Naive thymus-derived CD4-positive, alpha-beta T cell (primary cell): ENCODE measurements at regions of chr1 and their contacts with region 1.

Region 1: DNA sequence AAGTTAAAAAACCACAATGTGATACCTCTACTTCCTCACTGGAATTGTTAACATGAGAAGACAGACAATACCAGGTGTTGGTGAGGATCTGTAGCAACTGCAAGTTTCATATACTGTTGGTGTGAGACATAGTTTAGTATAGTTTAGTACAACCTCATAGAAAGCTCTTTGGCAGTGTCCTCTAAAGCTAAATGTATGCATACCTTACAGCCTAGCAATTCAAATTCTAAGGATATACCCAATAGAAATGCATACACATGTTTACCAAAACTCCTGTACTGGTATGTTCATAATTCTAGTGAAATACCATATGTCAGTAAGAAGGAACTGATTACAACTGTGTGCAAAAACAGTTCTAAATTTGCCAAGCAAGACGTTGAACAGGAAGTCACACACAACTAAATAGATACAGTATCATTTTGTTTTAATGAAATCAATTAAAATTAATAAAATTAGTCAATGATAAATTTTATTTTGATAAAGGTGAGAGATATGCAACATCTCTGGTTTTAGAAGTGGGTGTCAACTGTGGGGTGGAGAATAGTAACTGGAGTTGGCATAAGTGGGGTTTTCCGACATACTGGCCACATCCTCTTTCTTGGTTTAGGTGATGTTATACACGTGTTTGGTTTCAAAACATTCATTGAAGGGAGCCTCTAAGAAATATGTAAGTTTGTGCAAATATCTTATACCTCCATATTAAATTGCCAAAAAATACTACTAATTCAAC is 450.7 kb downstream of the PTPRC start:
- DNase-seq: peak in 8 of 9 donors; percentile 25 to 72 (median 48)
- ATAC-seq: peak; percentile 99
- H3K4me3 ChIP-seq: no peak overlapping the region
- H3K4me3 Mint-ChIP-seq: peak overlapping the region in 8 of 10 donors; percentile 7 to 53 (median 48)
- H3K27ac ChIP-seq: no peak overlapping the region
- H3K27ac Mint-ChIP-seq: peak overlapping the region in 2 of 9 donors; percentile 20 to 80
- H3K4me1 ChIP-seq: peaks cover 10 to 21% of the 10 kb centered on the region in 2 donors
- H3K4me1 Mint-ChIP-seq: peaks cover 4 to 43% (median 19%) of the 10 kb centered on the region in 7 donors
- H3K27me3 ChIP-seq: no peaks in the 10 kb centered on the region
- H3K27me3 Mint-ChIP-seq: peaks cover 0 to 4% (median 0%) of the 10 kb centered on the region in 5 donors

Region 2: GRCh38 chr1:199067483-199067882 is 22.1 kb before region 1 on chr1:
- CTCF ChIA-PET with region 1: no interaction called
- POLR2A ChIA-PET with region 1: no interaction called
- intact Hi-C with region 1: loop called in 1 of 2 experiments (anchors 2 kb)
- DNase-seq: no peak
- ATAC-seq: no peak
- H3K4me3 ChIP-seq: no peak overlapping the region
- H3K4me3 Mint-ChIP-seq: peak overlapping the region in 1 of 10 donors; percentile 37
- H3K27ac ChIP-seq: no peak overlapping the region
- H3K27ac Mint-ChIP-seq: peak overlapping the region in 1 of 9 donors; percentile 36
- H3K4me1 ChIP-seq: no peaks in the 10 kb centered on the region
- H3K4me1 Mint-ChIP-seq: peaks cover 0 to 39% (median 0%) of the 10 kb centered on the region in 7 donors
- H3K27me3 ChIP-seq: no peaks in the 10 kb centered on the region
- H3K27me3 Mint-ChIP-seq: peaks cover 0 to 5% (median 0%) of the 10 kb centered on the region in 5 donors

Region 3: DNA sequence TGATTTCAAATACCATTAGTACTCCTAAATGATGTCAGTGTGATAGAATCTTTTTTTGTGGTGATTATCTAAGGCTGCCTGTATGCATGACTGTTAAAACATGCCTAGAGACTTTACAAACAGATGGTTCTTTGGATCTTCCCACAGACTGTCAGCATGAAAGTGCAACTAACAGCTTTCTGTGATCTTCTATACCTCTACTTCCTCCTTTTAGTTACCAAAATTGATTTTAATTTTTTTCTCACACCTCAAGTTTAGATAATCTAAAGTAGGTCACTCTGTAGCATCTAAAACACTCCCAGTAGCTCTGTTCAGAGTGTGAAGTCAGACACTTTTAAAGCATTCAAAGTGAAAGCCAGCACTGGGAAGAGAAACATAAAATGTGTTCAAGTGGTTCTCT is 83.8 kb after region 1 on chr1:
- CTCF ChIA-PET with region 1: no interaction called
- POLR2A ChIA-PET with region 1: no interaction called
- intact Hi-C with region 1: loop called in 1 of 2 experiments (anchors 2 kb)
- DNase-seq: peak in 7 of 9 donors; percentile 9 to 56 (median 25)
- ATAC-seq: peak; percentile 90
- H3K4me3 ChIP-seq: no peak overlapping the region
- H3K4me3 Mint-ChIP-seq: peak overlapping the region in 7 of 10 donors; percentile 8 to 55 (median 32)
- H3K27ac ChIP-seq: no peak overlapping the region
- H3K27ac Mint-ChIP-seq: peak overlapping the region in 8 of 9 donors; percentile 4 to 73 (median 44)
- H3K4me1 ChIP-seq: peaks cover 23 to 48% of the 10 kb centered on the region in 2 donors
- H3K4me1 Mint-ChIP-seq: peaks cover 28 to 56% (median 43%) of the 10 kb centered on the region in 7 donors
- H3K27me3 ChIP-seq: no peaks in the 10 kb centered on the region
- H3K27me3 Mint-ChIP-seq: peaks cover 0 to 14% (median 0%) of the 10 kb centered on the region in 5 donors